Cardiac septum (tissue), 1 donor: ENCODE measurements at regions of chr7 and their contacts with region 1.

Region 1: GRCh38 chr7:74401137-74401859 is 52.4 kb upstream of the GTF2IRD1 start:
- DNase-seq: no peak

Region 2: GRCh38 chr7:73865738-73866445 is 535.4 kb before region 1 on chr7:
- intact Hi-C with region 1: loop called (anchors 5 kb)
- DNase-seq: no peak

Region 3: DNA sequence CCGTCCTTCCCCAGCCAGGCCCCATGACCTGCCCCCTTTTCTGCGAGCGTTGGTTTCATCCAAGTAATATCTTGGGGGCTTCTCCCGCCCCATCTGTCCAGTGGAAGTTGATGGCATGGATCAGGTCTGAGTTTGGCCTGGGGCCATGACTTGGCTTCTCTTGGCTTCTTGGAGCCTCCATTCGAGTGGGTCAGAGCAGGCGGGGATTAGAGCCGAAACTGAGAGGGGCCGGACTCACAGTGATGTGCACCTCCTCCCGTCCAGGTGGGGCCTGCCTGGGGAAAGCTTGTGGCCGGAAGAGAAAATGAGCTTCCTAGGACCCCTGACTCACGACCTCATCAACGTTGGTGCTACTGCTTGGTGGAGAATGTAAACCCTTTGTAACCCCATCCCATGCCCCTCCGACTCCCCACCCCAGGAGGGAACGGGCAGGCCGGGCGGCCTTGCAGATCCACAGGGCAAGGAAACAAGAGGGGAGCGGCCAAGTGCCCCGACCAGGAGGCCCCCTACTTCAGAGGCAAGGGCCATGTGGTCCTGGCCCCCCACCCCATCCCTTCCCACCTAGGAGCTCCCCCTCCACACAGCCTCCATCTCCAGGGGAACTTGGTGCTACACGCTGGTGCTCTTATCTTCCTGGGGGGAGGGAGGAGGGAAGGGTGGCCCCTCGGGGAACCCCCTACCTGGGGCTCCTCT is 332.8 kb before region 1 on chr7:
- intact Hi-C with region 1: loop called (anchors 5 kb)
- DNase-seq: no peak

Region 4: GRCh38 chr7:74206589-74207120 is 194.6 kb before region 1 on chr7:
- intact Hi-C with region 1: loop called (anchors 2 kb)
- DNase-seq: peak; percentile 95

Region 5: GRCh38 chr7:74343281-74344127 is 57.8 kb before region 1 on chr7:
- intact Hi-C with region 1: no loop called
- DNase-seq: no peak

Region 6: GRCh38 chr7:74505471-74506324 is 104.4 kb after region 1 on chr7:
- intact Hi-C with region 1: no loop called
- DNase-seq: no peak